Testis (tissue), 5 donors: ENCODE measurements at regions of chr6 and their contacts with region 1.

Region 1: DNA sequence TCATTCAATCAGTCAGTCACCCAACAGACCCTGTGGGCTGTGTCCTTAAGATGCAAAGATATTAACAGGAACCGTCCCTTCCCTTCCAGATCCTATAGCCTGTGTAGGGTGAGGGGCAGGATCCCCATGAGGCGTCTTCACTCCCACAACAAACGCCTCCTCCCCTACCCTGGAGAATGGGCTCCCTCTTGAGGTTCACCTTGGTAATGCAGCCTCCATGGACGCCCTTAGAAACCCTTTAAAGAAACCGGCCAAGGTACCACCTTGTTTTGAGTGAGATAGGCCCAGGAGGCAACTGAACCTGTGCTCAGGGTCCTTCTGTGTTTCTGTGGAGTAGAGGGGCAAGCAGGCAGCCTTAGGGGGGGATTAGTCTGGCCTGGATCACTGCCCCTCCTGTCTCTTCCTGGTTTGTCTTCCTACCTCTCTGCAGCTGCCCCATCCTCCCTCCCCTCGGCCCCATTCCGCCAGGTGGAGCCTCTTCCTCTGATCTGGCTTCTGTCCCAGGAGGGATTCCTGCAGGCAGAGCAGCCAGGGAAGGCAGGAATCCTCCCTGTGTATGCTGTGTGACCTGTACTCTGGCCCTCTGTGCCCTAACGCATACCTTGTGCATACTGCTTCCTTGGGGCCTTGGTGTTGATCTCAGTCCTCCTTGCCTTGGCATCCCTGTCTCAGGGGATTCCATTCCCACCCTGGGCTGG is 6.6 kb upstream of the GUCA1A start:
- DNase-seq: peak; percentile 81
- H3K4me3 ChIP-seq: no peak overlapping the region
- H3K27ac ChIP-seq: no peak overlapping the region
- H3K4me1 ChIP-seq: no peaks in the 10 kb centered on the region
- H3K27me3 ChIP-seq: no peaks in the 10 kb centered on the region
- CTCF ChIP-seq: peak; percentile 79 to 97 (median 87)
- POLR2A ChIP-seq: no peak

Region 2: GRCh38 chr6:42075159-42075838 is 91.3 kb before region 1 on chr6:
- intact Hi-C with region 1: loop called (anchors 5 kb)
- DNase-seq: peak; percentile 80
- H3K4me3 ChIP-seq: no peak overlapping the region
- H3K27ac ChIP-seq: no peak overlapping the region
- H3K4me1 ChIP-seq: peaks cover 4% of the 10 kb centered on the region
- H3K27me3 ChIP-seq: no peaks in the 10 kb centered on the region
- CTCF ChIP-seq: peak; percentile 62 to 78 (median 72)
- POLR2A ChIP-seq: no peak